ENCODE measurements at regions of chr12 and their contacts with region 1.

Region 1: DNA sequence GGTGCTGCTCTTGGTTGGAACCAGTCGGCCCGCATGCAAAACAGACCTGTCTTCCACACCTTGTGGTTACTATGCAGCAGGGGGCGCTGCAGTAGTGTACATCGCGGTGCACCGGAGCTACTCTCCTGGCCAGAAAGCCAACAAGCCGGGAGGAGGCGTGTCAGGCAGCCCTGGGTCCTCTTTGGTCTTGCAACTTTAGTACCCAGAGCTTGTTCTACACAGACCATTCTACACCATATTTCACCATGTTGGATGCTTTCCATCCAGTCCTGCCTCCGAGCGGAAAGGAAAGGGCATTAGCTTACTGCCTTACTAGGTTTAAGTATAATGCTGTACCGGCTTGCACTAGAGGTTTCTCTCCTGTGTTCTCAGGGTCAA is 927 bp upstream of the TMTC2 start:
- DNase-seq: peak; percentile 86
- ATAC-seq: peak; percentile 69
- H3K4me3 ChIP-seq: peak overlapping the region; percentile 68 to 69
- H3K27ac ChIP-seq: peak overlapping the region; percentile 80
- H3K4me1 ChIP-seq: peaks cover 4 to 18% of the 10 kb centered on the region in 2 experiments; a peak in 3 of 4 replicates
- H3K27me3 ChIP-seq: no peaks in the 10 kb centered on the region
- CTCF ChIP-seq: peak; percentile 80 to 89 (median 82)
- POLR2A ChIP-seq: no peak
- RAD21 ChIP-seq: peak; percentile 95

Region 2: DNA sequence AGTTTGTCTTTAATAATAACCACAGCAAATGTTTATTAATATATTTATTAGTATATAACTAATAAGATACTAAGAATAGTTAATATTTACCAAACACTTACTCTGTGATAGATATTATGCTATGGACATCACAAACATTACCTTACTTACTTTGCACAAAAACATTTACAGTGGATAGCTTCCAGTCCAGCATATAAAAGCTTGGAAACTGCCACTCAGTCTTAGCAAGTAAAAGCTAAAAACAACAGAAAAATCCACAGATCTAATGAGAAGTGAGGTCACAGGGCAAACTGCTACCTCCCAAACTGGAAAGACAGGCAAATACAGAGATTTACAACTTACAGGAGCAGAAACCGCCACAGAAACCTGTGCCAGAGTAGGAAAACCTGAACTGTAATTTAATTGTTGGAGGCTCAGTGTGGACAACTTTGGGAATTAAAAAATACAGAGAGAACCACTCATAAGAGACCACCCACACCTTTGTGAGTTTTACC is 227.6 kb before region 1 on chr12:
- CTCF ChIA-PET with region 1: no interaction called
- POLR2A ChIA-PET with region 1: no interaction called
- RAD21 ChIA-PET with region 1: no interaction called
- intact Hi-C with region 1: no loop called
- DNase-seq: no peak
- ATAC-seq: no peak
- H3K4me3 ChIP-seq: no peak overlapping the region
- H3K27ac ChIP-seq: no peak overlapping the region
- H3K4me1 ChIP-seq: no peaks in the 10 kb centered on the region
- H3K27me3 ChIP-seq: no peaks in the 10 kb centered on the region
- CTCF ChIP-seq: no peak
- POLR2A ChIP-seq: no peak
- RAD21 ChIP-seq: no peak

Region 3: DNA sequence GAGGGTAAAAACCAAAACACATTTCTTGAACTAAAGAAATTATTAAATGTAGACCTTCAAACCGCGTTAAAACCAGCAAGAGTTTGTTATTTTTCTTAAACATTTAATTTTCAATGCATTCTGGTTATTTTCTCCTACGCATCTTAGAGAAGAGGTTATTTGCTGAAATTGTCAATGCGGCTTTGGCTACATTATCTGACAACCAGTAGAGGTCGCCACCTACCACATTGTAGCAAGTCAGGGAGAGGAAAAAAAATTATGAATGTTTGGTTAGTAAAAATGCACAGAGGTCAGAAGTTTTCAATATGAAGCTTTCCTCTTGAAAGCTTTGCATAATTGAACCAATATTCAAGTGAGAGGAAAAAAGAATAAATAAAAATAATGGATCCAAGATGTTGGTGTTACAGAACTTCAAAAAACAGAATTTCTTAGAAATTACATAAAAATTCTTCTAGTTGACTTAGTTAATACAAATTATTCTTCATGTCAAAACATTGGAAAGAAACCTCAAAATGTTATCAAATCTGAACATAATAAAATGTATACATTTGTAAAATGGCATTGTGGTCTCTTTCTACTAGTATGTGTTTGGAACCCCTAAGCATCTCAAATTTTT is 158.5 kb before region 1 on chr12:
- CTCF ChIA-PET with region 1: interaction called, 5 read pairs
- POLR2A ChIA-PET with region 1: no interaction called
- RAD21 ChIA-PET with region 1: no interaction called
- intact Hi-C with region 1: loop called (anchors 2 kb)
- DNase-seq: peak; percentile 47
- ATAC-seq: peak; percentile 77
- H3K4me3 ChIP-seq: no peak overlapping the region
- H3K27ac ChIP-seq: no peak overlapping the region
- H3K4me1 ChIP-seq: no peaks in the 10 kb centered on the region
- H3K27me3 ChIP-seq: no peaks in the 10 kb centered on the region
- CTCF ChIP-seq: peak; percentile 68 to 96 (median 81)
- POLR2A ChIP-seq: no peak
- RAD21 ChIP-seq: peak; percentile 85

Region 4: DNA sequence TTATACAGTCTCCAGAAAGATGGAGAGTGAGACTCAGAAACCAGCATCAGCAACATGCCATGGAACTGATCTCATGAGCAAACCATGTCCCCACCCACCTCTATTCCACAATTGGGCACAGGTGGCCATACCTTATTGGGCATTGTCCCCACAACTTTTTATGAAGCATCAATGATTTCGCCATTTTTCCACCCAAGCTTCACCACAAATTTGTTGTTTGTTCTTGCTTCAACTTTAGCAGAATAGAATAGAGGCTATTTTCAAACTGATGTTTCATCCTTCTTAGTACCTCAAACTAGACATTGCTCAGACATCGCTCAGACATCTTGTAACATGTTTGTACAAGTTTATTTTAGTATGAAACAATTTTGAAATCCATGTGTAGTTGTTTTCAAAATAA is 111.6 kb before region 1 on chr12:
- CTCF ChIA-PET with region 1: no interaction called
- POLR2A ChIA-PET with region 1: no interaction called
- RAD21 ChIA-PET with region 1: no interaction called
- intact Hi-C with region 1: no loop called
- DNase-seq: no peak
- ATAC-seq: no peak
- H3K4me3 ChIP-seq: no peak overlapping the region
- H3K27ac ChIP-seq: no peak overlapping the region
- H3K4me1 ChIP-seq: no peaks in the 10 kb centered on the region
- H3K27me3 ChIP-seq: no peaks in the 10 kb centered on the region
- CTCF ChIP-seq: no peak
- POLR2A ChIP-seq: no peak
- RAD21 ChIP-seq: no peak

Region 5: GRCh38 chr12:82740129-82741000 is 54.6 kb after region 1 on chr12:
- CTCF ChIA-PET with region 1: interaction called, 4 read pairs
- POLR2A ChIA-PET with region 1: interaction called, 4 read pairs
- RAD21 ChIA-PET with region 1: interaction called in 1 of 2 experiments, 3 read pairs
- intact Hi-C with region 1: loop called (anchors 2 kb)
- DNase-seq: peak; percentile 84
- ATAC-seq: peak; percentile 95
- H3K4me3 ChIP-seq: peak overlapping the region; percentile 12 to 38
- H3K27ac ChIP-seq: peak overlapping the region; percentile 73
- H3K4me1 ChIP-seq: peaks cover 17 to 32% of the 10 kb centered on the region in 2 experiments
- H3K27me3 ChIP-seq: no peaks in the 10 kb centered on the region
- CTCF ChIP-seq: no peak
- POLR2A ChIP-seq: no peak
- RAD21 ChIP-seq: no peak

Region 6: GRCh38 chr12:83389237-83389996 is 703.6 kb after region 1 on chr12:
- CTCF ChIA-PET with region 1: interaction called, 15 read pairs
- POLR2A ChIA-PET with region 1: no interaction called
- RAD21 ChIA-PET with region 1: interaction called, 3 read pairs
- intact Hi-C with region 1: loop called (anchors 5 kb)
- DNase-seq: peak; percentile 18
- ATAC-seq: peak; percentile 81
- H3K4me3 ChIP-seq: no peak overlapping the region
- H3K27ac ChIP-seq: no peak overlapping the region
- H3K4me1 ChIP-seq: no peaks in the 10 kb centered on the region
- H3K27me3 ChIP-seq: no peaks in the 10 kb centered on the region
- CTCF ChIP-seq: peak; percentile 23 to 53 (median 47); a peak in 5 of 6 replicates
- POLR2A ChIP-seq: no peak
- RAD21 ChIP-seq: peak; percentile 65

Region 7: GRCh38 chr12:84497819-84498218 is 1812.0 kb after region 1 on chr12:
- CTCF ChIA-PET with region 1: interaction called, 12 read pairs
- POLR2A ChIA-PET with region 1: no interaction called
- RAD21 ChIA-PET with region 1: no interaction called
- intact Hi-C with region 1: loop called (anchors 2 kb)
- DNase-seq: peak; percentile 16
- ATAC-seq: peak; percentile 54
- H3K4me3 ChIP-seq: no peak overlapping the region
- H3K27ac ChIP-seq: no peak overlapping the region
- H3K4me1 ChIP-seq: peaks cover 0 to 12% of the 10 kb centered on the region in 2 experiments; a peak in 2 of 4 replicates
- H3K27me3 ChIP-seq: no peaks in the 10 kb centered on the region
- CTCF ChIP-seq: peak; percentile 32 to 58 (median 49); a peak in 5 of 6 replicates
- POLR2A ChIP-seq: no peak
- RAD21 ChIP-seq: peak; percentile 42; the same call in 1 of the 2 replicates

Measured in HCT116 (cell line).